Activated CD4-positive, alpha-beta T cell treated with anti-CD3 and anti-CD28 coated beads for 36 hours (primary cell): ENCODE measurements at regions of chr12 and their contacts with region 1.

Region 1: DNA sequence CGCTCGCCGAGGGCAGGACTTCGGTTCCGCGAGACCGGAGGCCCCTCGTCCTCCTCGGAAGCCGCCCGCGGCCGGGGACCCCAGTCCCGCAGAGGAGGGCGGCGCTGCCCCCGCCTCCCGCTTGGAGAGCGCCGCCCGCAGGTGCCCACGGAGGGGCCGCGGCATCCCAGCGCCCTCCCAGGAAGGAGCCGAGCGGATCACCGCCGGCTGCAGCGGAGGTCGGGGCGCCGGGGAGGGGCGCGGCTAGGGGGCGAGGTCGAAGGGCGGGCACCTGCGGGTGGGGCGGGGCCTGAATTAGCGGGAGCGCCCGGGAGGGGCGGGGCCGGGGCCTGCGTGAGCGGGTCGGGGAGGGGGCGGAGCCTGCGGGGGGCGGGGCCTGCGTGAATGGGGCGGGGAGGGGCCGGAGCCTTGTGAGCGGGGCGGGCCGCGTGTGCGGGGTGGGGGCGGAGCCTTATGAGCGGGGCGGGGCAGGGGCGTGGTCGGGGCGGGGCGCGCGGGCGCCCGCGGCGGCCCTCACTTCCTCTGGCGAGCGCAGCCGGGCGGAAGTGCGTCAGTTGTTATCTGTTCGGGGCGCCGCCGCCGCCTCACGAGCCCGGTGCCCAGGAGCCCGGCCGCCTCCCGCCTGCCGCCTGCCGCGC is at the start of gene FBRSL1:
- DNase-seq: peak; percentile 98
- ATAC-seq: peak; percentile 74
- H3K4me3 Mint-ChIP-seq: peak within 1 kb of the TSS; percentile 85
- H3K27ac Mint-ChIP-seq: peak within 1 kb of the TSS; percentile 85
- H3K4me1 Mint-ChIP-seq: peaks cover 61% of the 10 kb centered on the region
- H3K27me3 Mint-ChIP-seq: no peaks in the 10 kb centered on the region
- total RNA-seq, gene FBRSL1: 35.7 to 55.1 TPM

Region 2: DNA sequence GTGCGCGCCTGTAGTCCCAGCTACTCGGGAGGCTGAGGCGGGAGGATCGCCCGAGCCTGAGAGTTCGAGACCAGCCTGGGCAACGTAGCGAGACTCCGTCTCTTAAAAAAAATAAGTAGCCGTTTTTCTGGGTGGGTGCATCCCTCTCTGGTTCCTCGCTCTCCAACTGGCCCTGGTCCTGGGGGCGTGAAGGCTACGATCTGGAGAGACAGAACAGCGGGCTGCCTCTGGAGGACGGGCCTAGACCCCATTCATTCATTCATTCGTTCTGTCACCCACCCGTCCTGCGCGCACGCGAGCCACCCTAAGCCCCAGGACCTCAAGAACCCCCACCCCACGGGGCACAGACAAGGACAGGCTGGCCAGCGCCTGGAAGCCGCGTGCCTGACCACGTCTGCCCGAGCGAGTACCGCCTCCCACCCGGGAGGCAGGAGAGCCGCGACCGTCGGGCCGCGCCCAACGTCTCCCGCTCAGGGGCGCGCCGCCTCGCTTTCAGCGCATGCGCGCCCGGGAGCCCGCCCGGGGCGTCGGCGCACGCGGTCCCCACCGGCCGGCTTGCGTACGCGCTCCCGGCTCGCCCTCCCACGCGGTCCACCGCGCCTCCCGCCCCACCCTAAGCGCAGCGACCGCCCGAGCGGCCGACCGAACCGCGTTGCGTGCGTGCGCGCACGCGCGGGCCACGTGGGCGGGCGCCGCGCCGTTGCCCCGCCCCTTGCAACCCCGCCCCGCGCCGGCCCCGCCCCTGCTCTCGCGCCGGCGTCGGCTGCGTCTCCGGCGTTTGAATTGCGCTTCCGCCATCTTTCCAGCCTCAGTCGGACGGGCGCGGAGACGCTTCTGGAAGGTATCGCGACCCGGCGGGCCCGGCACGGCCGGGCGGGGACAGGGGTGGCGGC is 1618.2 kb before region 1 on chr12 and contains the start of gene RAN:
- CTCF ChIA-PET with region 1: no interaction called
- POLR2A ChIA-PET with region 1: no interaction called
- intact Hi-C with region 1: loop called in 1 of 2 experiments (anchors 5 kb)
- DNase-seq: peak; percentile 96
- ATAC-seq: peak; percentile 73
- H3K4me3 Mint-ChIP-seq: peak within 1 kb of the TSS; percentile 99
- H3K27ac Mint-ChIP-seq: peak within 1 kb of the TSS; percentile 100
- H3K4me1 Mint-ChIP-seq: peaks cover 56% of the 10 kb centered on the region
- H3K27me3 Mint-ChIP-seq: no peaks in the 10 kb centered on the region
- total RNA-seq, gene RAN: 1,919 to 2,242 TPM

Region 3: DNA sequence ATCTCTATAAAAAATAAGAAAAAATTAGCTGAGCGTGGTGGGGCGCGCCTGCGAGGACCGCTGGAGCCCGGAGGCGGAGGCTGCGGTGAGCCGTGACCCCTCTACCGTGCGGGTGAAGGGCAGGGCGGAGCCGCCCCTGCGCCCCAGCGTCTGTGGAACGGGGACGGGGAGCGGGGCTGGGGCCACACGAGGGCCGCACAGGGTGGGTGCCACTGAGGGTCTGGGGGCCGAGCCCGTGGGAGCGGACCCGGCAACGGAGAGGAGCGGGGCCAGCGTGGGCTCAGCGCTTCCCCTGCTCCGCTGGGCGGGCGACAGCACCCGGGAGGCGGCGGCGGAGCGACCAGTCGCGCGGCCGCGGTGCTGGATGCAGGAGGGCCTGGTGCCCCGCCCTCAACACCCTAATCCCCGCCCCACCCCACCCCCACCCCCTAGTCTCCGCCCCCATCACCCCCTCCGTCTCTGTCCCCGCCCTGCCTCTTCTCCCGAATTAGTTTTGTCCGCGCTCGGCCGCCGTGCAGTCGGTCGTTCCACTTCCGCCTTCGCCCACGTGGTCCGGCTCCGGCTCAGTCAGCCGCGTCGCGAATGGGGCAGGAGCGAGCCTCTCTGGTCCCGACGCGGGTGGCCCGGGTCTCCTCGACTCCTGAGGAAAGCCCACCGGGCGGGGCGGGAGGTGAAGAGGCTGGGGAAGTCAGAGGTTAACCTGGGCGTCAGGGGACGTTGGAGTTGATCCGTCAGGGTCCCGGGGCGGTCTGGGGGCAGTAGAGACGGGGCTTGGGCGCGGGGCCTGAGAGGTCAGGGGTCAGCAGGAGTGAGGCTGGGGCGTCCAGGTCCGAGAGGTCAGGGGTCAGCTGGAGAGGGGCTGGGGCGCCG is 560.8 kb before region 1 on chr12 and contains the start of gene PUS1:
- CTCF ChIA-PET with region 1: no interaction called
- POLR2A ChIA-PET with region 1: no interaction called
- intact Hi-C with region 1: loop called in 1 of 2 experiments (anchors 1 kb)
- DNase-seq: peak; percentile 97
- ATAC-seq: peak; percentile 89
- H3K4me3 Mint-ChIP-seq: peak within 1 kb of the TSS; percentile 97
- H3K27ac Mint-ChIP-seq: peak within 1 kb of the TSS; percentile 85
- H3K4me1 Mint-ChIP-seq: peaks cover 25% of the 10 kb centered on the region
- H3K27me3 Mint-ChIP-seq: no peaks in the 10 kb centered on the region
- total RNA-seq, gene PUS1: 37.8 to 56.5 TPM

Region 4: GRCh38 chr12:132144115-132144812 is 345.5 kb before region 1 on chr12 and contains the starts of genes DDX51 and NOC4L:
- CTCF ChIA-PET with region 1: no interaction called
- POLR2A ChIA-PET with region 1: no interaction called
- intact Hi-C with region 1: loop called in 1 of 2 experiments (anchors 5 kb)
- DNase-seq: peak; percentile 97
- ATAC-seq: peak; percentile 94
- H3K4me3 Mint-ChIP-seq: peak within 1 kb of the TSS; percentile 88
- H3K27ac Mint-ChIP-seq: peak within 1 kb of the TSS; percentile 86
- H3K4me1 Mint-ChIP-seq: peaks cover 32% of the 10 kb centered on the region
- H3K27me3 Mint-ChIP-seq: no peaks in the 10 kb centered on the region
- total RNA-seq, gene DDX51: 19.2 to 31.4 TPM
- total RNA-seq, gene NOC4L: 30.5 to 35.7 TPM

Region 5: GRCh38 chr12:132475304-132476037 is 14.2 kb before region 1 on chr12:
- CTCF ChIA-PET with region 1: no interaction called
- POLR2A ChIA-PET with region 1: no interaction called
- intact Hi-C with region 1: loop called (anchors 1 kb)
- DNase-seq: peak; percentile 62
- ATAC-seq: peak; percentile 50
- H3K4me3 Mint-ChIP-seq: peak overlapping the region; percentile 39
- H3K27ac Mint-ChIP-seq: no peak overlapping the region
- H3K4me1 Mint-ChIP-seq: peaks cover 40% of the 10 kb centered on the region
- H3K27me3 Mint-ChIP-seq: no peaks in the 10 kb centered on the region

Region 6: GRCh38 chr12:132566516-132567131 is 76.9 kb after region 1 on chr12:
- CTCF ChIA-PET with region 1: no interaction called
- POLR2A ChIA-PET with region 1: no interaction called
- intact Hi-C with region 1: no loop called
- DNase-seq: no peak
- ATAC-seq: no peak
- H3K4me3 Mint-ChIP-seq: no peak overlapping the region
- H3K27ac Mint-ChIP-seq: no peak overlapping the region
- H3K4me1 Mint-ChIP-seq: no peaks in the 10 kb centered on the region
- H3K27me3 Mint-ChIP-seq: no peaks in the 10 kb centered on the region

Region 7: GRCh38 chr12:132600048-132601032 is 110.6 kb after region 1 on chr12:
- CTCF ChIA-PET with region 1: no interaction called
- POLR2A ChIA-PET with region 1: no interaction called
- intact Hi-C with region 1: loop called in 1 of 2 experiments (anchors 2 kb)
- DNase-seq: peak; percentile 70
- ATAC-seq: peak; percentile 69
- H3K4me3 Mint-ChIP-seq: peak overlapping the region; percentile 15
- H3K27ac Mint-ChIP-seq: no peak overlapping the region
- H3K4me1 Mint-ChIP-seq: peaks cover 15% of the 10 kb centered on the region
- H3K27me3 Mint-ChIP-seq: peaks cover 44% of the 10 kb centered on the region

Region 8: GRCh38 chr12:132761032-132761920 is 271.6 kb after region 1 on chr12 and contains the start of gene ANKLE2:
- CTCF ChIA-PET with region 1: no interaction called
- POLR2A ChIA-PET with region 1: no interaction called
- intact Hi-C with region 1: loop called in 1 of 2 experiments (anchors 5 kb)
- DNase-seq: peak; percentile 84
- ATAC-seq: peak; percentile 41
- H3K4me3 Mint-ChIP-seq: peak within 1 kb of the TSS; percentile 90
- H3K27ac Mint-ChIP-seq: peak within 1 kb of the TSS; percentile 98
- H3K4me1 Mint-ChIP-seq: peaks cover 33% of the 10 kb centered on the region
- H3K27me3 Mint-ChIP-seq: no peaks in the 10 kb centered on the region
- total RNA-seq, gene ANKLE2: 110 to 111 TPM